ENCODE measurements at regions of chr12 and their contacts with region 1.

Region 1: GRCh38 chr12:56315622-56316473 is at the start of gene CNPY2:
- DNase-seq: peak; percentile 96 to 98 (median 96)
- ATAC-seq: peak; percentile 91
- H3K4me3 ChIP-seq: peak within 1 kb of the TSS; percentile 72 to 89
- H3K27ac ChIP-seq: peak within 1 kb of the TSS; percentile 95 to 98 (median 97)
- H3K4me1 ChIP-seq: peaks cover 22% of the 10 kb centered on the region
- H3K27me3 ChIP-seq: no peaks in the 10 kb centered on the region
- CTCF ChIP-seq: peak in 4 of 7 experiments; percentile 11 to 49 (median 42)
- POLR2A ChIP-seq: peak; percentile 74 to 96 (median 92)
- total RNA-seq, gene CNPY2: 40.2 to 103 TPM

Region 2: DNA sequence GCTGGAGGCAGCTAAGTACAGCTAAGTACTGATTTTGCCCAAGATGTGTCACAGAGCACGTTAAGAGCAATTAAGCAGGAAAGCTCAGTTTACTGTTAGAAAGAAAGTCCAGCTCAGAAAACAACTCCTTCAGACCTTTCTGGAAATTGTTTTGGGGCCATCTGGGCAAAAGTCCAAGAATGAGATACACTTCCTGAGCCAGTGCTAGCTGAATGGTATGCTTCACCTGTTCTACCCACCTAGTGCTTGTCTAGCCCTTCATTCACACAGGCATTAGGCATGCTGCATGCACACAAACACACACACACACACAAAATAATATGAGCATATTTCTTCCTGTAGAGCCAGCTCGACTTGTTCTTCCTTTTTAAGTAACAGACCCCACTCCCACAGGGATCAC is 301.6 kb before region 1 on chr12:
- intact Hi-C with region 1: no loop called
- DNase-seq: no peak
- ATAC-seq: no peak
- H3K4me3 ChIP-seq: no peak overlapping the region
- H3K27ac ChIP-seq: no peak overlapping the region
- H3K4me1 ChIP-seq: no peaks in the 10 kb centered on the region
- H3K27me3 ChIP-seq: no peaks in the 10 kb centered on the region
- CTCF ChIP-seq: no peak
- POLR2A ChIP-seq: no peak

Region 3: GRCh38 chr12:56450241-56450640 is 134.4 kb after region 1 on chr12:
- intact Hi-C with region 1: loop called (anchors 10 kb)
- DNase-seq: no peak
- ATAC-seq: no peak
- H3K4me3 ChIP-seq: no peak overlapping the region
- H3K27ac ChIP-seq: peak overlapping the region in 1 of 4 donors; percentile 92
- H3K4me1 ChIP-seq: peaks cover 12% of the 10 kb centered on the region
- H3K27me3 ChIP-seq: no peaks in the 10 kb centered on the region
- CTCF ChIP-seq: no peak
- POLR2A ChIP-seq: no peak